ENCODE measurements at regions of chr6 and their contacts with region 1.

Region 1: DNA sequence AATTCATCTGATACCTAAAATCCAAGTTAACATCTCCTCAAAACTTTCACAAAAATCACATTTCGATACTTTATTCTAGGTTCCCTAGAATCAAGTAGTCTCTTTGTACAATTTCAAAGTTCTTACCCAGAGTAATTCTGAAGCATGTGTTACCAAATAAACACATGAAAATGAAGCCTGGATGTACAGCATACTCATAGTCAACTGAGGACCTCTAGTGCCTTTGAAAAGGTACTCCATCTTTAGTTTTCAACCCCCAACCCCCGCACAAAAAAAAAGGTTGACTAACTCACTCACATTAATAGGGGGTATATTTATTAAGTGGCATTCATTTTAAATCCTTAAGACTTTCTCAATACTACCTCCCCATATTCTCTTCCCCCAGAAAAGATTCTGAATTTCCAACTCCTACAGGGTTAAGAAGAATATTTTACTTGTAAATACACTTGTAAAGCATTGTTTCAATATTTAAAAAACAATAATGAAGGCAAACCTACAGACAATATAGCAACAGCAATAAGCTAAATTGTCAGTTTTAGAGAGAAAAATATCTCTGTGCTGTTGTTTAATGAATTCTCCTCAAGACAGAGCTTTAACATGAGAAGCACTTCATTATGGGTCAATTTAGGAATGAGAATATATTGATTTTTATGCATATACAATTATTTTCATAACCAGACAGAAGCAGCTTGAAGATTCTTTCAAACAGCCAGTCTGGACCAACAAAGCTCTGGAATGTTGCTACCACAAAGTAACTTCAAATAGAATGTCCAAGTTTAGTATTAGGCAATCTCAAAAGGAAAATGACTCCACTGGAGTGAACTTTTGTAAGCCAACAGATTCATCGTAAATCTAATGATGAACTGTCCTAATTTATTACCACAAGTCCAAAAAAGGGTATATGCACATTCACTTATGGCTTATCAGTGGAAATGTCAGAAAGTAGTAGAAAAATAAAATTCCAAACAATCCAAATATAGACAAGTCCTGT is 3.3 kb downstream of the PLN start:
- DNase-seq: peak; percentile 12
- H3K4me3 Mint-ChIP-seq: no peak overlapping the region
- H3K27ac Mint-ChIP-seq: no peak overlapping the region
- H3K4me1 Mint-ChIP-seq: peaks cover 39% of the 10 kb centered on the region
- H3K27me3 Mint-ChIP-seq: no peaks in the 10 kb centered on the region

Region 2: GRCh38 chr6:117976030-117976651 is 575.2 kb before region 1 on chr6:
- CTCF ChIA-PET with region 1: interaction called, 3 read pairs
- intact Hi-C with region 1: loop called (anchors 1 kb)
- DNase-seq: peak; percentile 17
- H3K4me3 Mint-ChIP-seq: no peak overlapping the region
- H3K27ac Mint-ChIP-seq: no peak overlapping the region
- H3K4me1 Mint-ChIP-seq: no peaks in the 10 kb centered on the region
- H3K27me3 Mint-ChIP-seq: peaks cover 8% of the 10 kb centered on the region

Region 3: DNA sequence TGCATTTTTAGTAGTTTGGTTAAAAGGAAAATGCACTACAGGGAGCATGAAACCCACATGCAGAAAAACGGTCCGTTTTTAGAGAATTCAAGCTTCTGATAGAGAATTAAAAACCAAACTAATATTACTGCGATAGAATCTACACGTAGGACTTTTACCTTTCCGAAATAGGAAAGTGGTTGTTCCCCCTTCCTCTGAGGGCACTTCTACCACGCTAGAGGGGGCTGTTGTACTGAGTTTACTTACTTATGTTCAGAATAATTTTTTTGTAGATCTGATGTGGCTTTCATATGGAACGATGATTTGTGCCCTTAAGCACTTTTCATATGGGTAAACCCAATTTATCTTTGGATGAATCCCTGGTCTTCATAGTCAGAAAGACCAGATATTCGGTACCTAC is 267.6 kb before region 1 on chr6:
- CTCF ChIA-PET with region 1: interaction called, 5 read pairs
- intact Hi-C with region 1: loop called (anchors 1 kb)
- DNase-seq: peak; percentile 69
- H3K4me3 Mint-ChIP-seq: no peak overlapping the region
- H3K27ac Mint-ChIP-seq: no peak overlapping the region
- H3K4me1 Mint-ChIP-seq: peaks cover 2% of the 10 kb centered on the region
- H3K27me3 Mint-ChIP-seq: peaks cover 3% of the 10 kb centered on the region

Region 4: GRCh38 chr6:118509009-118509617 is 42.2 kb before region 1 on chr6:
- CTCF ChIA-PET with region 1: no interaction called
- intact Hi-C with region 1: loop called (anchors 1 kb)
- DNase-seq: peak; percentile 31
- H3K4me3 Mint-ChIP-seq: no peak overlapping the region
- H3K27ac Mint-ChIP-seq: no peak overlapping the region
- H3K4me1 Mint-ChIP-seq: peaks cover 9% of the 10 kb centered on the region
- H3K27me3 Mint-ChIP-seq: no peaks in the 10 kb centered on the region

Region 5: DNA sequence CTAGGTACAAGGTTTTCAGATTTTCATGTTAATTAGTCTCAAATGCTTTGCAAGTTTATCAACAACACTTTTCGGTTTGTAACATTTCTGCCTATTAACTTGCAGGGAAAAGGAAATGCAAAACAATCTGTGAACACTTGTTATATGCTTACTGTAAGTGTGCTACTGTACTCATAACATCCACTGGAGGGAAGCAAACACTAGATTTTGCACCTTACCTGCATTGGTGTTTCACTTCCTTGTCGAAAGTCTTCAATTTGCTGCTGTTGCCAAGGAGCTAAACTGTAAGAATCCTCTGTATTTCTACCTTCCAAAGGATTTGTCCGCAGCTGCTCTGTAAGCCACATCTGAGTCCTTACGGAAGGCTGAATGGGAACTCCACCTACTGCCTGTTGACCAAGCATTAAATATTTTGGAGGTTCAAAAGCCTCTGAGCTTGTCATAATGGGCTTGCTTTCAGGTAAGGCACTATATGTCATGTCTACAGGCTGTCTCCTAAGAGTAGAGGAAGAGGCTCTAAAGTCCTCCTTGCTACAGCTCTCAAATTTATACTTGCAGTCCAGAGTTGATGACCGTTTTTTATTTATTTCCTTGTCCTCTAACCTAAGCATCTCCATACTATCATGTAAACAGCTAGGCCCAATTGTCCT is 14.1 kb after region 1 on chr6:
- CTCF ChIA-PET with region 1: interaction called, 11 read pairs
- intact Hi-C with region 1: no loop called
- DNase-seq: peak; percentile 26
- H3K4me3 Mint-ChIP-seq: no peak overlapping the region
- H3K27ac Mint-ChIP-seq: peak overlapping the region; percentile 12
- H3K4me1 Mint-ChIP-seq: peaks cover 28% of the 10 kb centered on the region
- H3K27me3 Mint-ChIP-seq: no peaks in the 10 kb centered on the region